Natural killer cell (primary cell): ENCODE measurements at regions of chr3 and their contacts with region 1.

Region 1: DNA sequence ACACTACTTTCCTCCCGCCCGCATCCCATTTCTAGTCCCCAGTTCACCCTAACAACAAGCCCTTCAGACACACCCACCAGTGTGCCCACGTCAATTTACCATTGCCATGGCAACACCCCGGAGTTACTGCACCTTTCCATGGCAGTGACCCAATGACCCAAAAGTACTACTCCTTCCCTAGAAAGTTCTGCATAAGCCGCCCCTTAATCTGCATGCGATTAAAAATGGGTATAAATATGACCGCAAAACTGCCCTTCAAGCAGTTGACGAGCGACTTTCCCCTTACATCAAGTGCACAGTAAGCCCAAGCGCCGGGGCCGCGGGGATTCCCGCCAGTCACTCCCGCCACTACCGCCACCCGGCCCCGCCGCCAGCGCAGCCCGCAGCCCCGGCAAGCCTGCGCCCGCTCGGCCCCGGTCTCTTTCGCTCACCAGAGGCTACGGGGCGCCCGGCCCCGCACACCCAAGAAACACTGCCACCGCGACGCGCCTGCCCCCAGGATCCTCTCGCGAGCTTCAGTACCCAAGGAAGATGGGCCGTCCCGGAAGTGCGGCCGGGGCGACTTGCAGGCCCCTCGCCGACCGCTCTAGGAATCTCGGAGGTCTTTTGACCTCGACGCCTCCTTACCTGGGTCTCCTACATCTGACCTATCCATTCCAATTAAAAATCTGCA is 27.2 kb upstream of the ZNF502 start:
- DNase-seq: peak; percentile 61 to 68
- ATAC-seq: peak; percentile 75 to 91 (median 83)
- H3K4me3 ChIP-seq: peak overlapping the region; percentile 41
- H3K4me3 Mint-ChIP-seq: peak overlapping the region; percentile 85
- H3K27ac ChIP-seq: peak overlapping the region; percentile 5
- H3K27ac Mint-ChIP-seq: peak overlapping the region; percentile 76 to 86
- H3K4me1 ChIP-seq: peaks cover 9% of the 10 kb centered on the region
- H3K4me1 Mint-ChIP-seq: peaks cover 18 to 21% of the 10 kb centered on the region in 2 donors
- H3K27me3 ChIP-seq: no peaks in the 10 kb centered on the region
- H3K27me3 Mint-ChIP-seq: peaks cover 16 to 25% of the 10 kb centered on the region in 2 donors
- CTCF ChIP-seq: no peak

Region 2: GRCh38 chr3:44648564-44649229 is 36.6 kb before region 1 on chr3 and contains the start of gene ZNF35:
- intact Hi-C with region 1: loop called (anchors 1 kb)
- DNase-seq: peak; percentile 34 to 43
- ATAC-seq: peak; percentile 69 to 82 (median 80)
- H3K4me3 ChIP-seq: peak within 1 kb of the TSS; percentile 69
- H3K4me3 Mint-ChIP-seq: peak within 1 kb of the TSS; percentile 88
- H3K27ac ChIP-seq: peak within 1 kb of the TSS; percentile 58
- H3K27ac Mint-ChIP-seq: peak within 1 kb of the TSS; percentile 83 to 84
- H3K4me1 ChIP-seq: peaks cover 8% of the 10 kb centered on the region
- H3K4me1 Mint-ChIP-seq: peaks cover 17 to 26% of the 10 kb centered on the region in 2 donors
- H3K27me3 ChIP-seq: no peaks in the 10 kb centered on the region
- H3K27me3 Mint-ChIP-seq: no peaks in the 10 kb centered on the region
- CTCF ChIP-seq: no peak
- total RNA-seq, gene ZNF35: 8.6 to 14.5 (median 10.9) TPM